ENCODE measurements at regions of chr19 and their contacts with region 1.

Region 1: DNA sequence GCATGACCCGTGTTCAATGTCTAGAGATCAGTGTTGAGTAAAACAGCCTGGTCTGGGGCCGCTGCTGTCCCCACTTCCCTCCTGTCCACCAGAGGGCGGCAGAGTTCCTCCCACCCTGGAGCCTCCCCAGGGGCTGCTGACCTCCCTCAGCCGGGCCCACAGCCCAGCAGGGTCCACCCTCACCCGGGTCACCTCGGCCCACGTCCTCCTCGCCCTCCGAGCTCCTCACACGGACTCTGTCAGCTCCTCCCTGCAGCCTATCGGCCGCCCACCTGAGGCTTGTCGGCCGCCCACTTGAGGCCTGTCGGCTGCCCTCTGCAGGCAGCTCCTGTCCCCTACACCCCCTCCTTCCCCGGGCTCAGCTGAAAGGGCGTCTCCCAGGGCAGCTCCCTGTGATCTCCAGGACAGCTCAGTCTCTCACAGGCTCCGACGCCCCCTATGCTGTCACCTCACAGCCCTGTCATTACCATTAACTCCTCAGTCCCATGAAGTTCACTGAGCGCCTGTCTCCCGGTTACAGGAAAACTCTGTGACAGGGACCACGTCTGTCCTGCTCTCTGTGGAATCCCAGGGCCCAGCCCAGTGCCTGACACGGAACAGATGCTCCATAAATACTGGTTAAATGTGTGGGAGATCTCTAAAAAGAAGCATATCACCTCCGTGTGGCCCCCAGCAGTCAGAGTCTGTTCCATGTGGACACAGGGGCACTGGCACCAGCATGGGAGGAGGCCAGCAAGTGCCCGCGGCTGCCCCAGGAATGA is 1.5 kb upstream of the CEACAM5 start:
- H3K4me3 Mint-ChIP-seq: peak overlapping the region; percentile 72
- H3K27ac Mint-ChIP-seq: no peak overlapping the region
- H3K4me1 Mint-ChIP-seq: peaks cover 7% of the 10 kb centered on the region
- H3K27me3 Mint-ChIP-seq: peaks cover 48% of the 10 kb centered on the region

Region 2: DNA sequence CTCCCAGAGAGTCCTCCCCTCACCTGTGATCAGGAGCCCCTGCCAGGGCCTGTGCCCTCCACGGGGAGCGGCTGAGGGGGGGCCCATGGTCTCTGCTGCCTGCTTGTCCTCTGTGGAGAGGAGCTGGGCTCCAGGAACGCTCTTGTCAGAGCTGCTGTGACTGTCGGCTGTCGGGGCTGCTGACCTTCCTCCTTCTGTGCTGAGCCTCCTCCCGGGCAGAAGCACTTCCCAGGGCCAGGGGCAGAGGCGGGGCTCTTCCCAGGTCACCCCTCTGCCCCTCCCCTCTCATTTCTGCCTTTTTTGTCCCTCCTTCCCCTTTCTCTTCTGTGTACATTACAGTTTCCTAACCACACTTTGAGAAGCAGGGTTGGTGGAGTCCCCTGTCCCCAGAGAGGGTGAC is 80.0 kb before region 1 on chr19 and contains the start of gene CEACAM4:
- intact Hi-C with region 1: no loop called
- H3K4me3 Mint-ChIP-seq: peak within 1 kb of the TSS; percentile 88
- H3K27ac Mint-ChIP-seq: peak within 1 kb of the TSS; percentile 95
- H3K4me1 Mint-ChIP-seq: peaks cover 61% of the 10 kb centered on the region
- H3K27me3 Mint-ChIP-seq: no peaks in the 10 kb centered on the region

Region 3: DNA sequence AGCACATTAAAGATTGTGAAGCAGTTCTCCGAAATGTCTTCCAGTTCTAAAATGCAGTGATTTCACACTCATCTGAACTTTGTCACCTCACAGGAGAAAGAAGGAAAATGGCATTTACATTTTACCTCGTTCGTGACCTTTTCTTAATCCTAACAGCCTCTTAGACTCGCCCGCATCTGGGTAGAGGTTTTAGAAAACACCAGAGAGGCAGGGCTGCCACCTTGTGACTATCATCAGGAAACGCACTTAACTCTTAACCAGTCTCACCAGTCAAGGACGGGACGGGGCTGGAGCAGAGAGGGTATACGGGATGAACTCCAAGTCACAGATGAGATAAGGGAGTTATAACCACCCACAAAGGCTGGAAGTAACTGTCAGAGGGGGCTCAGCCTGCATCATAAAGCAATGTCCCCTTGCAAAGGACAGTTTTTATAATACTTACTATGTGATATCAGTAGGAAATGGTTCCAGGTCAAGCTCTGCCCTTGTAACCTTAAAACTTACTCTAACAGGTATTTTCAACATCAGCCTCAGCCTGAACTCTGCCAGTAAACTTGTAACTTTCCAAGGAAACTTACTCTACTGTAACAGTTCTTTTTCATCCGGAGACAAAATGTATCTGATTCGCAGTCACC is 39.8 kb after region 1 on chr19:
- intact Hi-C with region 1: loop called (anchors 1 kb)
- H3K4me3 Mint-ChIP-seq: no peak overlapping the region
- H3K27ac Mint-ChIP-seq: no peak overlapping the region
- H3K4me1 Mint-ChIP-seq: peaks cover 43% of the 10 kb centered on the region
- H3K27me3 Mint-ChIP-seq: peaks cover 26% of the 10 kb centered on the region

Region 4: GRCh38 chr19:41847351-41848105 is 140.6 kb after region 1 on chr19:
- intact Hi-C with region 1: no loop called
- H3K4me3 Mint-ChIP-seq: no peak overlapping the region
- H3K27ac Mint-ChIP-seq: no peak overlapping the region
- H3K4me1 Mint-ChIP-seq: no peaks in the 10 kb centered on the region
- H3K27me3 Mint-ChIP-seq: peaks cover 32% of the 10 kb centered on the region